Gastrocnemius medialis (tissue), 4 donors: ENCODE measurements at regions of chr4 and their contacts with region 1.

Region 1: DNA sequence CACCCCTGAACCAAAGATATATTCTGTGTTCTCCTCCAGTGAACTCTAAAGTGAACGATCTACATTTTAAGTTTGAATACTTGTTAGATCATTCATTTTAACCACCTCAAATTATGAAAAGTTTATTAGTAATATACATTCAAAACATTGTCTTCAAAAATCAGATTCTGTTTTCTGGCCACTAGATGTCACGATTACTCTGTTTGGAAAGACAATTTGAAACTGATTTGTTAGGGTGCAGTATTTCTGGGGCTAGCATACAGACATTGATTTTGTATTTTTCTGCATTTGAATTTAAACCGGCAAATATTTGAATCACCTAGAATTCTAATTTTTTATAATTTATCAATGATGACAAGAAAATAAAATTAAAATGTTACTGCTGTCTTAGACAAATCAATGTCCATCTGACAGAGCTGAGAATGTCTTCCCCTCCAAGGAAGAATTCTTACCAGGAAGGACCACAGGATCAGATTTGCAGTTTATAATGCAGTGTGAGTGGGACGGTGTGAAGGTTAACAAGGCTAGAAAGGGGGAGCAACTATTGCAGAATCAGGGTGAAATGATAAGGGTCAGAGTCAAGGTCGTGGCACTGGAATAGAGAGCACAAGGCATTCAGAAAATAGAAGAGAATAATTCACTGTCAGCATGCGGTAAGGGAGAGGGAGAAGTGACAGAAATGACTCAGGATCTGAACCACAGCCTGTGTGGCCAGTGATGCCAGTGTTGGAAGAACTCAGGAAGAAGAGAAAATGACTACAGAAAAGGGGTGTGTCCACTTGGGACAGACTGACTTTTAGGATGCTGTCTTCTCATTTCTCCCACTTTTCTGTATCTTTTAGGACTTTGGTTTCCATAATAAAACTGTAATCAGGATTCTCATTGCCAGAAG is 91.6 kb downstream of the ANXA10 start:
- DNase-seq: no peak
- ATAC-seq: peak in 1 of 2 donors; percentile 19
- H3K4me3 ChIP-seq: no peak overlapping the region
- H3K27ac ChIP-seq: no peak overlapping the region
- H3K4me1 ChIP-seq: no peaks in the 10 kb centered on the region
- H3K27me3 ChIP-seq: no peaks in the 10 kb centered on the region
- CTCF ChIP-seq: peak in 4 of 5 experiments; percentile 44 to 72 (median 65)
- POLR2A ChIP-seq: no peak

Region 2: GRCh38 chr4:168685136-168685809 is 501.3 kb after region 1 on chr4:
- in situ Hi-C with region 1: loop called in 1 of 4 experiments (anchors 25 kb)
- intact Hi-C with region 1: no loop called
- DNase-seq: no peak
- ATAC-seq: no peak
- H3K4me3 ChIP-seq: no peak overlapping the region
- H3K27ac ChIP-seq: no peak overlapping the region
- H3K4me1 ChIP-seq: peaks cover 0 to 7% of the 10 kb centered on the region in 2 donors
- H3K27me3 ChIP-seq: no peaks in the 10 kb centered on the region
- CTCF ChIP-seq: no peak
- POLR2A ChIP-seq: no peak

Region 3: DNA sequence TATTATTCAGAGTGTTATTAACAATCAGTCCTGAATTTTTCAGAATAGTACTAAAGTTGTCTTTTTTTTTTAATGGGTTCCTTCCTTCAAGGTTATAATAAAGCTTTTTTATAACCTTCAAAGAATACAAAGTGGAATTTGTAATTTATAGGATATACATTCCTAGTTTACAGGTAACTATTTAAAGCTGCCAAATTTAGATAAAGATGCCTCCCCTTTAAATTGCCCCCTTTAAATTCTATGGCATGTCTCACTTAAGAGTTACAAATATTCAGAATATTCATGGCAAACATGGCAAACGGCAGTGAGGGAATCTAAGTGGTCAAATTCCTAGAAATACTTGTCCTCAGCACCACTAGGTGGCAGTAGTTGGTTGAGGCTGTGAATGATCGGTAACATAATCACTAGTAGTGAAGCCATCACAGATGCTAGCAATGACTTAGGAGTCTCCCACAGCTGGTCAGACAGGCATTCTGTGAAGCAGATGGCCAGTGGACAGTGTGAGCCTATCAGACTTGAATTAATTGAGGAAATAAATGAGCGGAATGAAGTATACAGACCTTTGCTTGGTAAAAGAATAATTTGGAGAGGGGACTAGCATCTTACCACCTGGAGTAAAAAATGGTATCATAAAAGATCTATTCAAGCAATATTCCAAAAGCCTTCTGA is 739.7 kb after region 1 on chr4:
- in situ Hi-C with region 1: loop called in 1 of 4 experiments (anchors 25 kb)
- intact Hi-C with region 1: loop called (anchors 10 kb)
- DNase-seq: peak in 1 of 2 donors; percentile 25
- ATAC-seq: peak; percentile 45 to 78
- H3K4me3 ChIP-seq: no peak overlapping the region
- H3K27ac ChIP-seq: no peak overlapping the region
- H3K4me1 ChIP-seq: peaks cover 0 to 6% of the 10 kb centered on the region in 2 donors
- H3K27me3 ChIP-seq: no peaks in the 10 kb centered on the region
- CTCF ChIP-seq: peak; percentile 71 to 80 (median 73)
- POLR2A ChIP-seq: no peak

Region 4: GRCh38 chr4:168942985-168943384 is 759.0 kb after region 1 on chr4:
- in situ Hi-C with region 1: loop called in 1 of 4 experiments (anchors 25 kb)
- intact Hi-C with region 1: no loop called
- DNase-seq: no peak
- ATAC-seq: no peak
- H3K4me3 ChIP-seq: no peak overlapping the region
- H3K27ac ChIP-seq: no peak overlapping the region
- H3K4me1 ChIP-seq: no peaks in the 10 kb centered on the region
- H3K27me3 ChIP-seq: no peaks in the 10 kb centered on the region
- CTCF ChIP-seq: peak in 1 of 5 experiments; percentile 31
- POLR2A ChIP-seq: no peak